PC-9 (cell line): ENCODE measurements at regions of chr15 and their contacts with region 1.

Region 1: GRCh38 chr15:43998607-43999006 is 171.8 kb downstream of the WDR76 start:
- DNase-seq: peak in 1 of 2 experiments; percentile 27
- H3K4me3 ChIP-seq: no peak overlapping the region
- H3K27ac ChIP-seq: no peak overlapping the region
- H3K4me1 ChIP-seq: no peaks in the 10 kb centered on the region
- H3K27me3 ChIP-seq: no peaks in the 10 kb centered on the region
- CTCF ChIP-seq: no peak

Region 2: GRCh38 chr15:44325568-44325967 is 327.0 kb after region 1 on chr15:
- CTCF ChIA-PET with region 1: no interaction called
- POLR2A ChIA-PET with region 1: no interaction called
- intact Hi-C with region 1: no loop called
- DNase-seq: no peak
- H3K4me3 ChIP-seq: no peak overlapping the region
- H3K27ac ChIP-seq: no peak overlapping the region
- H3K4me1 ChIP-seq: no peaks in the 10 kb centered on the region
- H3K27me3 ChIP-seq: no peaks in the 10 kb centered on the region
- CTCF ChIP-seq: no peak

Region 3: DNA sequence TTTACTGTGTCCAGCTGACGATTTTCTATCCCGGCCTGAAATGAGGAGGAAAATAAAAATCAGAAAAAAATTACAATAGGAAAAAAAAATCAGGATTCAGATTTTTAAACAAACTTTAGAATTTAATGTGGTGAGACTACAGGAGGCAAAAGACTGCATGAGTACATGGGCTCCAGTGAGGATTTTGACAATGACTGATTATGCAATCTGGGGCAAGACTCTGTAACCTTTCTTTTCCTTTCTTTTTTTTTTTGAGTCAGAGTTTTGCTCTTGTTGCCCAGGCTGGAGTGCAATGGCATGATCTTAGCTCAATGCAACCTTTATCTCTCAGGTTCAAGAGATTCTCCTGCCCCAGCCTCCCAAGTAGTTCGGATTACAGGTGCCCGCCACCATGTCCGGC is 635.0 kb after region 1 on chr15:
- CTCF ChIA-PET with region 1: no interaction called
- POLR2A ChIA-PET with region 1: interaction called, 10 read pairs
- intact Hi-C with region 1: no loop called
- DNase-seq: no peak
- H3K4me3 ChIP-seq: no peak overlapping the region
- H3K27ac ChIP-seq: peak overlapping the region; percentile 43; the same call in 1 of the 2 replicates
- H3K4me1 ChIP-seq: no peaks in the 10 kb centered on the region
- H3K27me3 ChIP-seq: no peaks in the 10 kb centered on the region
- CTCF ChIP-seq: no peak

Region 4: DNA sequence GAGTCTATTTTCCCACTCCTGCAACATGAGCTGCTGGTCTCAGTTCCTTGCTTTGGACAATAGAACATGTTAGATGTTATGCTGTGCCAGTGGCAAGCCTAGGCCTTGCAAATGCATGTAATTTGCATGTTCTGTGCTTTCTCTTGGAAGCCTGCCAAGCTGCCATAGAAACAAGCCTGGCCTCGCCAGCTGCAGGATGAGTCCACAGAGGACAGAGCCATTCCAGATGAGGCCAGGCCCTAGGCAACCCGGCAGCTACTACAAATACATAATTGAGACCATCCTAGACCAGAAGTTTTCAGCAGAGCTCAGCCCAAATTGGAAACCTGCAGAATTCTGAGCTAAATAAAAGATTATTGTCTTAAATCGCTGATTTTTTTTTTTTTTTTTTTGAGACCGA is 777.3 kb after region 1 on chr15:
- CTCF ChIA-PET with region 1: no interaction called
- POLR2A ChIA-PET with region 1: no interaction called
- intact Hi-C with region 1: no loop called
- DNase-seq: no peak
- H3K4me3 ChIP-seq: no peak overlapping the region
- H3K27ac ChIP-seq: no peak overlapping the region
- H3K4me1 ChIP-seq: no peaks in the 10 kb centered on the region
- H3K27me3 ChIP-seq: no peaks in the 10 kb centered on the region
- CTCF ChIP-seq: no peak